ENCODE measurements at regions of chr7 and their contacts with region 1.

Region 1: DNA sequence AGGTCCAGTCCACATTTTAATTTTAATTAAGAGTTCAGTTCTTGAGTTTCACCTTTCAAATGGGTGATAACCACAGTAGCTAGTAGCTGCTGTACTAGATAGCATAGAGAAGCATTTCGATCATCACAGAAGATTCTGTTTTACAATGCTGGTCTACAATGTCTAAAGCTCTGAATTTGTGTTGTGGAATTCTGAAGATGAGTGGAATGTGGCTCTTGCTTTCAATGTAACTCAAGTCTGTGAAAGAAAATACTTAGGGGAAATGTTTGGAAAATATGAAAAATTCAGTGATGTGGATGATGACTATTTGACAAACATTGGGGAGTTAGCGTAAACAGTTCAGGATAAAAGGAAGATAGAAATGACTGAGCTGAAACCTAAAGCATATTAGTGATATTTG is 139.4 kb downstream of the GNAT3 start:
- DNase-seq: no peak
- H3K4me3 ChIP-seq: no peak overlapping the region
- H3K27ac ChIP-seq: peak overlapping the region in 1 of 4 donors; percentile 36
- H3K4me1 ChIP-seq: peaks cover 0 to 11% (median 4%) of the 10 kb centered on the region in 4 donors
- H3K27me3 ChIP-seq: no peaks in the 10 kb centered on the region
- CTCF ChIP-seq: no peak
- EP300 ChIP-seq: no peak
- POLR2A ChIP-seq: no peak

Region 2: GRCh38 chr7:79923953-79924352 is 448.5 kb before region 1 on chr7:
- intact Hi-C with region 1: no loop called
- DNase-seq: no peak
- H3K4me3 ChIP-seq: no peak overlapping the region
- H3K27ac ChIP-seq: no peak overlapping the region
- H3K4me1 ChIP-seq: no peaks in the 10 kb centered on the region
- H3K27me3 ChIP-seq: no peaks in the 10 kb centered on the region
- CTCF ChIP-seq: no peak
- EP300 ChIP-seq: no peak
- POLR2A ChIP-seq: no peak

Region 3: DNA sequence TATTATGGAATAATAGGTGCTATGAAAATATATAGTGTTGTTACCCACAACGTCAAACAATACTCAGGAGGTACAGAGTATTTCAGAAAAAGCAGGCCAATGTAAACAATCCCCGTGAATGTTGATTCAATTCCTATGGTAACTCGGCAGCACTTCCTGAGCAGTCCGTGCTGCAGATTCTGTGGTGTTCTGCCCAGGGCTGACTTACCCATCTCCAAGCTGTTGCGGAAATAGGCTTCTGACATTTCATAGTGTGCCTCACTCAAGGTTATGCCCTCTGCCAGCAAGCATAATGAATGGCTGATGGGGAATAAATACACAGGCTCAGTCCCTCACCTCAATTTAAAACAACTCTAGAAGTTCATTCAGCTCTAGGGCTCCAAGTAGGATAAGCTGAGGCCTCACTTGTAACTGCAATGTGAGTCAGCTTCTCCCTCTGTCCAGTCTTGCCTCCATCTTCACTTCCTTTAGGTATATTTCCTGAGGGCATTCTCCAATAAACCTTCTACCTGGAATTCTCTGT is 60.2 kb before region 1 on chr7:
- intact Hi-C with region 1: loop called (anchors 5 kb)
- DNase-seq: no peak
- H3K4me3 ChIP-seq: no peak overlapping the region
- H3K27ac ChIP-seq: peak overlapping the region; percentile 53 to 67 (median 58)
- H3K4me1 ChIP-seq: peaks cover 6 to 41% (median 28%) of the 10 kb centered on the region in 4 donors
- H3K27me3 ChIP-seq: no peaks in the 10 kb centered on the region
- CTCF ChIP-seq: no peak
- EP300 ChIP-seq: no peak
- POLR2A ChIP-seq: no peak

Measured in esophagus muscularis mucosa (tissue), 4 donors.